WTC11 (cell line): ENCODE measurements at regions of chr6 and their contacts with region 1.

Region 1: GRCh38 chr6:34055223-34055933 is 90.5 kb downstream of the GRM4 start:
- DNase-seq: peak; percentile 82
- ATAC-seq: peak; percentile 57
- H3K4me3 Mint-ChIP-seq: no peak overlapping the region
- H3K27ac Mint-ChIP-seq: no peak overlapping the region
- H3K4me1 Mint-ChIP-seq: peaks cover 50% of the 10 kb centered on the region
- H3K27me3 Mint-ChIP-seq: no peaks in the 10 kb centered on the region; the same call in 1 of the 2 replicates
- CTCF ChIP-seq: peak; percentile 68

Region 2: GRCh38 chr6:33771146-33772081 is 284.0 kb before region 1 on chr6:
- CTCF ChIA-PET with region 1: interaction called, 26 read pairs
- POLR2A ChIA-PET with region 1: no interaction called
- DNase-seq: peak; percentile 86
- ATAC-seq: peak; percentile 81
- H3K4me3 Mint-ChIP-seq: 0 out of 2 replicates have a peak overlapping the region, but pooled peaks have one; percentile 6
- H3K27ac Mint-ChIP-seq: peak overlapping the region; percentile 70
- H3K4me1 Mint-ChIP-seq: peaks cover 32% of the 10 kb centered on the region
- H3K27me3 Mint-ChIP-seq: no peaks in the 10 kb centered on the region
- CTCF ChIP-seq: peak; percentile 86

Region 3: GRCh38 chr6:33994472-33995308 is 60.7 kb before region 1 on chr6:
- CTCF ChIA-PET with region 1: interaction called, 12 read pairs
- POLR2A ChIA-PET with region 1: no interaction called
- DNase-seq: no peak
- ATAC-seq: no peak
- H3K4me3 Mint-ChIP-seq: no peak overlapping the region
- H3K27ac Mint-ChIP-seq: no peak overlapping the region
- H3K4me1 Mint-ChIP-seq: peaks cover 11% of the 10 kb centered on the region
- H3K27me3 Mint-ChIP-seq: peaks cover 77% of the 10 kb centered on the region
- CTCF ChIP-seq: no peak

Region 4: GRCh38 chr6:34044945-34045595 is 10.3 kb before region 1 on chr6:
- CTCF ChIA-PET with region 1: interaction called, 23 read pairs
- POLR2A ChIA-PET with region 1: no interaction called
- DNase-seq: no peak
- ATAC-seq: no peak
- H3K4me3 Mint-ChIP-seq: no peak overlapping the region
- H3K27ac Mint-ChIP-seq: no peak overlapping the region
- H3K4me1 Mint-ChIP-seq: peaks cover 22% of the 10 kb centered on the region
- H3K27me3 Mint-ChIP-seq: no peaks in the 10 kb centered on the region
- CTCF ChIP-seq: no peak

Region 5: GRCh38 chr6:34098045-34098936 is 42.9 kb after region 1 on chr6:
- CTCF ChIA-PET with region 1: interaction called, 18 read pairs
- POLR2A ChIA-PET with region 1: no interaction called
- DNase-seq: no peak
- ATAC-seq: peak; percentile 28
- H3K4me3 Mint-ChIP-seq: no peak overlapping the region
- H3K27ac Mint-ChIP-seq: peak overlapping the region; percentile 92
- H3K4me1 Mint-ChIP-seq: peaks cover 51% of the 10 kb centered on the region
- H3K27me3 Mint-ChIP-seq: no peaks in the 10 kb centered on the region
- CTCF ChIP-seq: no peak

Region 6: DNA sequence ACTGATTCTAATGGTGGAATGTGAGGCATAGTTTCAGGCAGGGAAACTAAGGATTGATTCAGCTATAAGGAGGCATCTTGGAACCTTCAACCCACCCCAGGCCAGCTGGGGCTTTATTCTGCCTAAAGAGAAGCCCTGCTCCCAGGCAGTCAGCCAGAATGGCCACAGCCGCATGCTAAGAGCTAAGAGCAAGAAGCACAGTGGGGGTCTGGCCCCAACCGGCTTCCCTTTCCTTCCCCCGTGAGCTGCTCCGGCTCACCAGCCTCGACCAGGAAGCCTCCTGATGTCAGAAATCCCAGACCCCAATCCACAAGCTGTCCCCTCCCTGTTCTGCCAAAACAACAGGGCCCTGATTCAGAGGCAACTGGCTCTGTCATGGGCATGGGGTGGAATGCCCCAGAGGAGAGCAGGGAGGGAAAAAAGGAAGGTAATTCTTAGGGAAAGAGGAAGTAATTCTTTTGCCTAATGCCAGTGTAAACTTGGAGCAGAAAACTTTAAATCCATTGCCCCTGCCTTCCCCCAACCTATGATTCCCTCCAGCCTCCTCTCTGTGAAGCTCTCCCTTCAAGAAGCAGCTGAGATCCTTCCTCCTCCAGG is 83.6 kb after region 1 on chr6:
- CTCF ChIA-PET with region 1: interaction called, 83 read pairs
- POLR2A ChIA-PET with region 1: no interaction called
- DNase-seq: no peak
- ATAC-seq: peak; percentile 25
- H3K4me3 Mint-ChIP-seq: no peak overlapping the region
- H3K27ac Mint-ChIP-seq: peak overlapping the region; percentile 56
- H3K4me1 Mint-ChIP-seq: peaks cover 94% of the 10 kb centered on the region
- H3K27me3 Mint-ChIP-seq: peaks cover 11% of the 10 kb centered on the region
- CTCF ChIP-seq: no peak

Region 7: GRCh38 chr6:34260576-34261267 is 205.3 kb after region 1 on chr6:
- CTCF ChIA-PET with region 1: no interaction called
- POLR2A ChIA-PET with region 1: no interaction called
- DNase-seq: no peak
- ATAC-seq: no peak
- H3K4me3 Mint-ChIP-seq: no peak overlapping the region
- H3K27ac Mint-ChIP-seq: no peak overlapping the region
- H3K4me1 Mint-ChIP-seq: no peaks in the 10 kb centered on the region
- H3K27me3 Mint-ChIP-seq: 0 out of 2 replicates have a peak, but pooled peaks cover 3% of the 10 kb centered on the region
- CTCF ChIP-seq: no peak